ENCODE measurements at regions of chr9 and their contacts with region 1.

Region 1: GRCh38 chr9:137406876-137407589 is 15.9 kb downstream of the EXD3 start:
- DNase-seq: peak; percentile 86
- H3K4me3 ChIP-seq: peak overlapping the region; percentile 62
- H3K27ac ChIP-seq: no peak overlapping the region
- H3K4me1 ChIP-seq: peaks cover 6% of the 10 kb centered on the region
- H3K27me3 ChIP-seq: no peaks in the 10 kb centered on the region

Region 2: DNA sequence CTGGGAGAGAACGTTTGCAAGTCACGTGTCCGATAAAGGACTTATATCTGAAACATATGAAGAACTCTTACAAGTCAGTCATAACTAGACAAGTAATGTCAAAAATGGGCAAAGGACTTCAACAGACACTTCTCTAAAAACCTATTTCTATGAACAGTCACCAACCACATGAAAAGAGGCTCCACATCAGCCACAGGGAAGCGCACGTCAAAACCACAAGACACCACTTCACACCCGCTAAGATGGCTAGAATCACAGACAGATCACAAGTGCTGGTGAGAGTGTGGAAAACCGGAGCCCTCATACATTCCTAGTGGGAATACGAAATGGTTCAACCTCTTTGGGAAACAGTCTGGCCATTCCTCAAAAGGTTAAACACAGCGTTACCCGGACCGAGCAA is 1022.0 kb before region 1 on chr9:
- in situ Hi-C with region 1: no loop called
- DNase-seq: no peak
- H3K4me3 ChIP-seq: no peak overlapping the region
- H3K27ac ChIP-seq: no peak overlapping the region
- H3K4me1 ChIP-seq: no peaks in the 10 kb centered on the region
- H3K27me3 ChIP-seq: no peaks in the 10 kb centered on the region

Region 3: DNA sequence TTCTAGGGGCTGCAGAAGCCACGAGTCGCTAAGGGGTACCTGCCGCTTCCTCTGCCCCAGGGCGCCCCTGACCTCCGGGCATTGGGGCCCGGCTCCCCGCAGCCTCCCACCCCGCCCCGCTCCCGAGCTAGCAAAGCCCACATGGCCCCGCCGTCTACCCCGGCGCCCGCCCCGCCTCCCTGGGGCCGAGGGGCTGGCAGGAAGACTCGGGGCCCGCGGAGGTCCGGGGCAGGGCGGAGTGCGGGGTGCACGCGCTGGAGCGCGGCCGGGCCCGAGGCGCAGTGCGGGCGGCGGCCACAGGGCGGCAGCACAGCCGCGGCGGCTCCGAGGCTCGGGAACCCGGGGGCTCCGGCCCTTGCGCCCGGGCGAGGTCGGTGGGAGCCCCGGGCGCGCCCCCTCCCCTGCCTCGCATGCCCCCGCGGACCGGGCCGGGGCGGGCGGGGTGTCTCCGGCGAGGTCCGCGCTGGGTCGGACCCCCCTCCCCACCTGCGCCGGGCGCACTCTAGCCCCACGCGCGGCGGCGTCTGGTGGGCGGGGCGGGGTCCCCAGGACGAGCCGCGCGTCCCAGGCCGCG is 111.7 kb before region 1 on chr9:
- in situ Hi-C with region 1: loop called (anchors 10 kb)
- DNase-seq: peak; percentile 65
- H3K4me3 ChIP-seq: peak overlapping the region; percentile 48; the same call in 1 of the 2 replicates
- H3K27ac ChIP-seq: no peak overlapping the region
- H3K4me1 ChIP-seq: no peaks in the 10 kb centered on the region
- H3K27me3 ChIP-seq: peaks cover 33% of the 10 kb centered on the region

Region 4: GRCh38 chr9:137350696-137351584 is 56.1 kb before region 1 on chr9:
- in situ Hi-C with region 1: no loop called
- DNase-seq: no peak
- H3K4me3 ChIP-seq: no peak overlapping the region
- H3K27ac ChIP-seq: no peak overlapping the region
- H3K4me1 ChIP-seq: no peaks in the 10 kb centered on the region
- H3K27me3 ChIP-seq: no peaks in the 10 kb centered on the region